GM12878 (cell line): ENCODE measurements at regions of chr13 and their contacts with region 1.

Region 1: GRCh38 chr13:19601749-19602725 is 31.4 kb upstream of the MPHOSPH8 start:
- DNase-seq: no peak
- ATAC-seq: peak; percentile 95
- H3K4me3 ChIP-seq: peak overlapping the region; percentile 86
- H3K27ac ChIP-seq: peak overlapping the region; percentile 85
- H3K4me1 ChIP-seq: 0 out of 2 replicates have a peak, but pooled peaks cover 3% of the 10 kb centered on the region
- H3K27me3 ChIP-seq: no peaks in the 10 kb centered on the region
- CTCF ChIP-seq: peak; percentile 19 to 35 (median 25); a peak in 4 of 6 replicates
- EP300 ChIP-seq: no peak
- POLR2A ChIP-seq: peak; percentile 90
- RAD21 ChIP-seq: no peak

Region 2: DNA sequence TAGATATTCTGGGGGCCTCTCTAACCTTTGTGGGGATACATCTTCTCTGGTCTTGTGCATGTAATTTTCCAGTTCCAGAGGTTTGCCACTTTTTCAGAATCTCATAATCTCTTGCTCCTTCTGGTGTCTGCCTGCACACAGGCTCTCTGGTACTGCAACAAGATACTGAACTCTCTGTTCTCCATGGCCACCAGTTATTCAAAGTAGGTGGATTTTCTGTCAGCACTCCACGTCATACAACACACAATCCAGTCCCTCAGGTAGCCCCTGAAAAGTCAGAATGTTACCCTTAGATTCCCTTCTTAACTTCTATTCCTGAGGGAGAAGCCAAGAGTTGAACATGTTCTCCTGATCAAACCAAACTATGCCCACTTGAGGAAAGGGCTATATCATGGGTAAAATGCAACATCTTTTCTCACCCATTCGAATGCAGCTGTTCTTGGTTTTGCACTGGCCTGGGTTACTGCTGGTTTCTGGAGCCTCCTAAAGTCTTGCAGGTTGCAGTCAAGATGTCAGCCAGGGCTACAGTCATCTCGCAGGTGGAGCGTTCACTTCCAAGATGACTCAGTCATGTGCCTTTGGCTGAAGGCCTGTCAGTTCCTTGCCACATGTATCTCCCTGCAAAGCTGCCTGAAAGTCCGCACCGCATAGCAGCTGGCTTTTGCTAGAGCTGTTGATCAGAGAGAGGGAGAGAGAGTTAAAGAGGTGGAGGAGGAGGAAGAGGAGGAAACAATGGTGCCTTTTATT is 362.8 kb before region 1 on chr13:
- CTCF ChIA-PET with region 1: no interaction called
- POLR2A ChIA-PET with region 1: no interaction called
- RAD21 ChIA-PET with region 1: no interaction called
- SMC1A ChIA-PET with region 1: no interaction called
- in situ Hi-C with region 1: no loop called
- intact Hi-C with region 1: no loop called
- DNase-seq: no peak
- ATAC-seq: no peak
- H3K4me3 ChIP-seq: no peak overlapping the region
- H3K27ac ChIP-seq: no peak overlapping the region
- H3K4me1 ChIP-seq: no peaks in the 10 kb centered on the region
- H3K27me3 ChIP-seq: no peaks in the 10 kb centered on the region
- CTCF ChIP-seq: no peak
- EP300 ChIP-seq: no peak
- POLR2A ChIP-seq: no peak
- RAD21 ChIP-seq: no peak

Region 3: DNA sequence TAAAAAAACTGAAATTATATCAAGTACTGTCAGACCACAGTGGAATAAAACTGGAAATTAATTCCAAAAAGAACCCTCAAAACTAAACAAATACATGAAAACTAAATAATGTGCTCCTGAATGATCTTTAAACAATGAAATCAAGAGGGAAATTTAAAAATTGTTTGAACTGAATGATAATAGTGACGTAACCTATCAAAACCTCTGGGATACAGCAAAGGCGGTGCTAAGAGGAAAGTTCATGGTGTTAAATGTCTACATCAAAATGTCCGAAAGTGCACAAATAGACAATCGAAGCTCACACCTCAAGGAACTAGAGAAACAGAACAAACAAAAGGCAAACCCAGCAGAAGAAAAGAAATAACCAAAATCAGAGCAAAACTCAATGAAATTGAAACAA is 349.7 kb before region 1 on chr13:
- CTCF ChIA-PET with region 1: no interaction called
- POLR2A ChIA-PET with region 1: no interaction called
- RAD21 ChIA-PET with region 1: no interaction called
- SMC1A ChIA-PET with region 1: no interaction called
- in situ Hi-C with region 1: no loop called
- intact Hi-C with region 1: no loop called
- DNase-seq: no peak
- ATAC-seq: no peak
- H3K4me3 ChIP-seq: no peak overlapping the region
- H3K27ac ChIP-seq: no peak overlapping the region
- H3K4me1 ChIP-seq: no peaks in the 10 kb centered on the region
- H3K27me3 ChIP-seq: no peaks in the 10 kb centered on the region
- CTCF ChIP-seq: no peak
- EP300 ChIP-seq: no peak
- POLR2A ChIP-seq: no peak
- RAD21 ChIP-seq: no peak

Region 4: DNA sequence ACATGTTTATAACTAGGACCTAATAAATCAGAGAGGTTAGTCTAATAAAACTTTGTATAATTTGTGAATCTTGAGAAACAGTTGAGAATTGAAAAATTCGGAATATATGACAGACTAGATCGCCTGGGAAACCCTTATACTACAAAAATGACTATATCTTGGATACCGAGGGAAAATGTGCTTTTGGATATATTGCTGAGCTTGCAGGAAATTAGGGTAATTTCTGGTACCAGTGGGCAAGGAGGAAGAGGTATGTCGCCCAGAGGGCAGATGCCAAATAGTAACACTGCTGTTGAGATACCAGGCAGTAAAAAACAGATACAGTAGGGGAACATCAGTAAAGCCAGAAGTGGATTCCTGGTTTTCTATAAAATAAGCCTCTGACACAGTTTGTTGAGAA is 48.7 kb after region 1 on chr13:
- CTCF ChIA-PET with region 1: no interaction called
- POLR2A ChIA-PET with region 1: no interaction called
- RAD21 ChIA-PET with region 1: no interaction called
- SMC1A ChIA-PET with region 1: no interaction called
- in situ Hi-C with region 1: loop called (anchors 5 kb)
- intact Hi-C with region 1: no loop called
- DNase-seq: no peak
- ATAC-seq: no peak
- H3K4me3 ChIP-seq: no peak overlapping the region
- H3K27ac ChIP-seq: no peak overlapping the region
- H3K4me1 ChIP-seq: no peaks in the 10 kb centered on the region
- H3K27me3 ChIP-seq: no peaks in the 10 kb centered on the region
- CTCF ChIP-seq: no peak
- EP300 ChIP-seq: no peak
- POLR2A ChIP-seq: no peak
- RAD21 ChIP-seq: no peak